Activated CD4-positive, alpha-beta T cell treated with anti-CD3 and anti-CD28 coated beads for 36 hours (primary cell): ENCODE measurements at regions of chr16 and their contacts with region 1.

Region 1: DNA sequence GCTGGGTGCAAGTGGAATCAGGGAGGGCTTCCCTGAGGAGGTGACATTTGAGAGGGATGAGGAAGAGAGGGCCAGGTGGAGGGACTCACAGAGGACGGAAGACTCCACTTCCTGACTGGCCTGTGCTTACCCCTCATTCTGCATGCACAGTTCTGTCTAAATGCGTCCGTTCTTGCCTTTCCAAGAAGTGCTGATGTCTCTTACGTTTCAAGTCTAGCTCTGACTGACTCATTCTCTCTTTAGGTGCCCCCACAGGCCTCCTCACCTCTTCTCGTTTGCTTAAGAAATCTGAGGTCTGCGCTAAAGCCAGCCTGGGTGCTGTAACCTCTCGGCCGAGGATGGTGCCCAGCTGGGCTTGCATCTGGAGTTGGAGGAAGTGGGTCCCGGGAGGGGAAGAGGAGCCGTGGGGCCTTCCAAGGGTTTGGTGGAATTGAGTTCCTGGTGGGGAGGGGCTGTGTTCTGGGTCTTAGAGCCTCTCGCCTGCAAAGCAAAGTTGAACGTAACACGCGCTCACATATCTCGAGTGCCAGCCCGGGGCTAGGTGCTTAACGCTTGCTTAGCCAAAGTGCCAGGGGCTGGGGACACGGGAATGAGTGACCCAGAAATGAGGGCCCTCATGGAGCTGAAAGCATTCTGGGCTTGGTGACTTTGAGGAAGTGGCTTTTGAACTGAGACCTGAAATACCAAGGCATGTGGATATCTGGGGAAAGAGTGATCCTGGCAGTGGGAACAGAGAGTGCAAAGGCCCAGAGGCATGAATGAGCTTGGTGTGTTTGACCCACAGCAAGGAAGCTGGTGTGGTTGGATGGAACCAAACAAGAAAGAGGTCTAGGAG is 4.8 kb downstream of the IL4R start:
- DNase-seq: peak; percentile 80
- ATAC-seq: peak; percentile 78
- H3K4me3 Mint-ChIP-seq: peak overlapping the region; percentile 90
- H3K27ac Mint-ChIP-seq: peak overlapping the region; percentile 97
- H3K4me1 Mint-ChIP-seq: peaks cover 79% of the 10 kb centered on the region
- H3K27me3 Mint-ChIP-seq: no peaks in the 10 kb centered on the region

Region 2: DNA sequence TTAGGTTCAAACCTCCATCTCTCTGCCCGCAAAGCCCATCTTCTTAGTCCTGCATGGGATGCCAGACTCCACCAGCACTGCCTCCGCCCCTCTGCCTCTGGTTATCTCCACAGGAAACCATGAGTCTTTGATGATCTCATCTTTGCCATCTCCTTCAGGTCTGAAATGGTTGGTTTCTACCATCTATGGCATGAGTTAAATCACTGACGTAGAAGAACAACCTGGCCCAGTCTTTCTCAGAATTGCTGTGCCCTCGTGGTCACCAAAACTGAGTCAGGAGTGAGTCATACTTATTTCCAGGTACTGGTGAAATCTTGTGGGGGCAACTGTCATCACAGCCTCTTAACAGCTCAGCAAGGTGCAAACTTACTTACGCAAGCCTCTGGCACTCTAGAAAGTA is 720.5 kb before region 1 on chr16:
- CTCF ChIA-PET with region 1: no interaction called
- POLR2A ChIA-PET with region 1: no interaction called
- intact Hi-C with region 1: loop called in 1 of 2 experiments (anchors 1 kb)
- DNase-seq: peak; percentile 83
- ATAC-seq: peak; percentile 91
- H3K4me3 Mint-ChIP-seq: peak overlapping the region; percentile 20
- H3K27ac Mint-ChIP-seq: peak overlapping the region; percentile 82
- H3K4me1 Mint-ChIP-seq: peaks cover 54% of the 10 kb centered on the region
- H3K27me3 Mint-ChIP-seq: peaks cover 19% of the 10 kb centered on the region

Region 3: DNA sequence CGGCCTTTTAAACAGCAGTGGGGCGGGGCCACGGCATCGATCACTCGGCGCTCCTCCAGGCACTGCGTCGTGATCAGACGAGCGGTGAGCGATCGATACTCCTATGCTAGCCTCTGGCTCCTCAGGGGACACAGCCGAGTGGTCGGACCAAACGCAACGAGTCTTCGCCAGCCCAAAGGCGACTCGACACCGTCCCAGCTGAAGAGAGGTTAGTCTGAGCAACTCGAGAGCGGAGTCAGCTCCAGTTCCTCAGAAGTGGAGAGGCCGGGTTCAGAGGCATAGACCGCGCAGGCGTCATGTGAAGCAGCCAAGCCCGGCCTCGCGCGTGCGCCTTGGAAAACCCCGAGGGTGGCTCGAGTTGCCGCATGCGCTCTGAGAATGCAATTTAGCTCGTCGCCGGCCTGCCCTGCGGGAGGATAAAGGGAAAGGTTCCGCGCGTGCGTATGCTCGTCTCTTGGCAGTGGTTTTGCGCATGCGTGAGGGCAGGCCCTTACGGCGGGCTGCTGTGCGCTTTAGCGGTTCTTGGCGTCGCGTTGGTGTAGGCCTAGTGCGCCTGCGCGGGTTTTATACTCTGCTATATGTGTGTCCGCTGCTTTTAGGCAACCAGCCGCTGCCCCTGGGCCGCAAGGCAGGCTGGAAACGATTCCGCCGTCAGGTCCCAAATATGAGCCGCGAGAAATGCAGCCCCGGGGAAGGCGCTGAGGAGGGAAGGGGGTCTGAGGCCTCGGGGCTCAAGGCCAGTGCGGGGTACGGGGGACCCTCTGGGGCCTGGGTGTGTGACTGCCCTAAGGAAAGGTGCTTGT is 115.0 kb before region 1 on chr16 and contains the start of gene KDM8:
- CTCF ChIA-PET with region 1: interaction called, 3 read pairs
- POLR2A ChIA-PET with region 1: interaction called, 5 read pairs
- intact Hi-C with region 1: loop called in 1 of 2 experiments (anchors 1 kb)
- DNase-seq: peak; percentile 100
- ATAC-seq: peak; percentile 90
- H3K4me3 Mint-ChIP-seq: peak within 1 kb of the TSS; percentile 89
- H3K27ac Mint-ChIP-seq: peak within 1 kb of the TSS; percentile 100
- H3K4me1 Mint-ChIP-seq: peaks cover 47% of the 10 kb centered on the region
- H3K27me3 Mint-ChIP-seq: no peaks in the 10 kb centered on the region
- total RNA-seq, gene KDM8: 9.8 to 10.4 TPM

Region 4: GRCh38 chr16:27268376-27269299 is 50.0 kb before region 1 on chr16 and contains the start of gene NSMCE1:
- CTCF ChIA-PET with region 1: interaction called, 5 read pairs
- POLR2A ChIA-PET with region 1: interaction called, 10 read pairs
- intact Hi-C with region 1: loop called in 1 of 2 experiments (anchors 1 kb)
- DNase-seq: peak; percentile 99
- ATAC-seq: peak; percentile 94
- H3K4me3 Mint-ChIP-seq: peak within 1 kb of the TSS; percentile 90
- H3K27ac Mint-ChIP-seq: peak within 1 kb of the TSS; percentile 95
- H3K4me1 Mint-ChIP-seq: peaks cover 72% of the 10 kb centered on the region
- H3K27me3 Mint-ChIP-seq: no peaks in the 10 kb centered on the region
- total RNA-seq, gene NSMCE1: 110 to 127 TPM

Region 5: GRCh38 chr16:27286451-27286850 is 32.2 kb before region 1 on chr16:
- CTCF ChIA-PET with region 1: interaction called, 4 read pairs
- POLR2A ChIA-PET with region 1: interaction called, 13 read pairs
- intact Hi-C with region 1: loop called in 1 of 2 experiments (anchors 1 kb)
- DNase-seq: no peak
- ATAC-seq: no peak
- H3K4me3 Mint-ChIP-seq: no peak overlapping the region
- H3K27ac Mint-ChIP-seq: no peak overlapping the region
- H3K4me1 Mint-ChIP-seq: peaks cover 82% of the 10 kb centered on the region
- H3K27me3 Mint-ChIP-seq: peaks cover 3% of the 10 kb centered on the region

Region 6: GRCh38 chr16:27408012-27408601 is 89.5 kb after region 1 on chr16:
- CTCF ChIA-PET with region 1: interaction called, 5 read pairs
- POLR2A ChIA-PET with region 1: interaction called, 22 read pairs
- intact Hi-C with region 1: loop called (anchors 1 to 2 kb)
- DNase-seq: peak; percentile 71
- ATAC-seq: peak; percentile 59
- H3K4me3 Mint-ChIP-seq: peak overlapping the region; percentile 99
- H3K27ac Mint-ChIP-seq: peak overlapping the region; percentile 97
- H3K4me1 Mint-ChIP-seq: peaks cover 73% of the 10 kb centered on the region
- H3K27me3 Mint-ChIP-seq: no peaks in the 10 kb centered on the region

Region 7: DNA sequence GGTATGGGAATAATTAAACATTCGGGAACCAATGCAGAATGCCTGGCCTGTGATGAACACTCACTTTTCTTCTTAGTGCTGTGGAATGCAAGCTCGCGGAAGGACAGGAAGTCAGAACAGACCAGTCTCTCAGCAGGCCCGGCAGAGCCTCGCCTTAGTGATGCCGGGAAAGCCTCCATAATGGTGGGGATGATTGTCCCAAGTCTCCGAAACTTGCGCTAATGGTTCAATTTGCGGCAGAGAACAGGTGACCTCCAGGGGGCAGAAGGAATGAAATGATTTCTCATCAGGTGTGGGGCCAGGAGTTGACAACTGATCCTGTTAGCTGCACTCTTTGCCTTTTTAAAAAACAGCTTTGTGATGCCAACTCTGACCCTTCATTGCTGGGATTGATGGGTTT is 574.3 kb after region 1 on chr16:
- CTCF ChIA-PET with region 1: no interaction called
- POLR2A ChIA-PET with region 1: no interaction called
- intact Hi-C with region 1: no loop called
- DNase-seq: no peak
- ATAC-seq: no peak
- H3K4me3 Mint-ChIP-seq: no peak overlapping the region
- H3K27ac Mint-ChIP-seq: no peak overlapping the region
- H3K4me1 Mint-ChIP-seq: no peaks in the 10 kb centered on the region
- H3K27me3 Mint-ChIP-seq: peaks cover 25% of the 10 kb centered on the region